ENCODE measurements at regions of chr3 and their contacts with region 1.

Region 1: GRCh38 chr3:132641837-132642538 is 17.6 kb downstream of the ACAD11 start:
- DNase-seq: no peak
- ATAC-seq: peak; percentile 46
- H3K4me3 ChIP-seq: no peak overlapping the region
- H3K4me1 ChIP-seq: no peaks in the 10 kb centered on the region
- CTCF ChIP-seq: peak; percentile 48

Region 2: GRCh38 chr3:131819381-131820055 is 822.5 kb before region 1 on chr3:
- intact Hi-C with region 1: no loop called
- DNase-seq: no peak
- ATAC-seq: no peak
- H3K4me3 ChIP-seq: no peak overlapping the region
- H3K4me1 ChIP-seq: no peaks in the 10 kb centered on the region
- CTCF ChIP-seq: no peak

Region 3: GRCh38 chr3:132535575-132536441 is 106.2 kb before region 1 on chr3:
- intact Hi-C with region 1: loop called (anchors 2 to 5 kb)
- DNase-seq: peak in 1 of 3 donors; percentile 77
- ATAC-seq: peak; percentile 83
- H3K4me3 ChIP-seq: no peak overlapping the region
- H3K4me1 ChIP-seq: no peaks in the 10 kb centered on the region
- CTCF ChIP-seq: peak; percentile 32